A673 (cell line): ENCODE measurements at regions of chr12 and their contacts with region 1.

Region 1: DNA sequence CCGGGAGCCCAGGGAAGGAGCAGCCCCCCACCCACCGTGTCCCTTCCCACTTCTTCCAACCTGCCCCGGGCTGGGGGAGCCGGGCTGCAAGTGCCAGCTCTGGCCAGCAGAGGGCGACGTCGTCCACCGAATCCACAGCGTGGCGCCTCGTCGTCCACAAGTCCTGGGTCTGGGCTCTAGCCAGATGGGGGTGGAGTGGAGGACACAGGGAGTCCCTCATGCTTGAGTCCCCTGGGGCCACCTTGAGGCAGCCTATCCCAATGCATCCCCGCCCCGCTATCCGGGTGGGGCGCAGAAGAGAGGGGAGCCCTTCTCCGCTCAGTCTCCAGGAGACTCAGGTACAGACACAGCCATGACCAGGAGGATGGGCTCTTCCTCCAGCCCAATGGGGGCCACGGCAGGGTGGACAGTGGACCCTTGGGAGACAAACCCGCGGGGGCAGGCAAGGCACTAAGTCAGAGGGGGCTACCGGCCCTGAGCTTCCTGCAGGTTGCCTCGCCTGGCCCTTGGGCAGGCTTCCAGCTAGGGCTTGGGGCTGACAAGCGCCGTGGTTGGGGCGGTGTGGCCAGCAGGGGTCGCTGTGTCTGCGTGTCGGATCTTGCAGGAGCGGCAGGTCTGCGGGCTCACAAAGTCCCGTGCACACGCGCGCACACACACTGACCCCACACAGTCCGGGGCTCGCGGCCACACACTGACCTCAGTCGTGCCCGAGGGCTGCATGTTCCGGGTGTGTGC is 5.5 kb downstream of the AQP5 start:
- DNase-seq: peak; percentile 94
- H3K4me3 ChIP-seq: peak overlapping the region; percentile 47
- H3K27ac ChIP-seq: no peak overlapping the region
- H3K4me1 ChIP-seq: no peaks in the 10 kb centered on the region
- H3K27me3 ChIP-seq: peaks cover under 1% of the 10 kb centered on the region
- CTCF ChIP-seq: peak; percentile 80

Region 2: DNA sequence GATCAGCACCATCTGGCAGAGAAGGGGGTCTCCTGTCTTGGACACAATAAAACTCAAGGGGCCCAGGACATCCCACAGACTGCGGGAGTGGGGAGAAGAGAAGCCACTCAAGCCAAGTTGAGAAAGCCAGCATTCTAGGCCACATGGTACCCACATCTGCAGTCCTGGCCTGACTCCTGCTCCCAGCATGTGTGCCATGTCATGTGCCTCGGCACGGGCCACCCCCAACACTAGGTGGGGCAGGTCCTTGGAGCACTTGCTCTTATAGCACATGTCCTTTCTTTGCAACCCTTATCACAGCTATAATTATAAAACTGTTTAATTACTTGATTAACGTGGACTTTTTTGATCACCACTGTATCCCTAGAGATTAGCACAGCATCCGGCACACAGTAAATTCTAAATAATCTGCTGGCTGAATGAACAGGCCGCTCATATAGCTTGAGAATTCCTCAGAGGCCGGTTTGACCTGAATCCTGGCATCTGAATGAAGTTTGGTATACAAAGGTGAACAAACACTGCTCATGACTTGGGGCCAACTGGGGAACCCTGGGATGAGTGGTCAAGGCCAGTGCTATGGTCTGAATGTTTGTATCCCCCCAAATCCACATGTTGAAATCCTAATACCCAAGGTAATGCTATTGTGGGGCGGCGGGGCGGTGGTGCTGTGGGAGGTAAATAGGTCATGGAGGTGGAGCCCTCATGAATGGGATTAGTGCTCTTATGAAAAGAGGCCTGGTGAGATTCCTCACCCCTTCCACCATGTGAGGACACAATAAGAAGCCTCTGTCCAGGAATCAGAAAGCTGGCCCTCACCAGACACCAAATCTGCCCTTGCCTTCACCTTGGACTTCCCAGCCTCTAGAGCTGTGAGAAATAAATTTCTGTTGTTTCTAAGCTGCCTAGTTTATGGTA is 145.6 kb before region 1 on chr12:
- CTCF ChIA-PET with region 1: no interaction called
- POLR2A ChIA-PET with region 1: no interaction called
- intact Hi-C with region 1: no loop called
- DNase-seq: no peak
- H3K4me3 ChIP-seq: no peak overlapping the region
- H3K27ac ChIP-seq: no peak overlapping the region
- H3K4me1 ChIP-seq: peaks cover 9% of the 10 kb centered on the region
- H3K27me3 ChIP-seq: no peaks in the 10 kb centered on the region
- CTCF ChIP-seq: no peak

Region 3: GRCh38 chr12:49983892-49984291 is 16.7 kb after region 1 on chr12:
- CTCF ChIA-PET with region 1: interaction called, 13 read pairs
- POLR2A ChIA-PET with region 1: no interaction called
- intact Hi-C with region 1: no loop called
- DNase-seq: peak; percentile 92
- H3K4me3 ChIP-seq: no peak overlapping the region
- H3K27ac ChIP-seq: peak overlapping the region; percentile 29
- H3K4me1 ChIP-seq: peaks cover 16% of the 10 kb centered on the region
- H3K27me3 ChIP-seq: no peaks in the 10 kb centered on the region
- CTCF ChIP-seq: 0 out of 2 replicates have a peak, but pooled peaks have one; percentile 17

Region 4: GRCh38 chr12:50043854-50044253 is 76.6 kb after region 1 on chr12:
- CTCF ChIA-PET with region 1: interaction called, 21 read pairs
- POLR2A ChIA-PET with region 1: no interaction called
- intact Hi-C with region 1: no loop called
- DNase-seq: no peak
- H3K4me3 ChIP-seq: no peak overlapping the region
- H3K27ac ChIP-seq: no peak overlapping the region
- H3K4me1 ChIP-seq: no peaks in the 10 kb centered on the region
- H3K27me3 ChIP-seq: no peaks in the 10 kb centered on the region
- CTCF ChIP-seq: no peak

Region 5: GRCh38 chr12:50055831-50056638 is 88.8 kb after region 1 on chr12:
- CTCF ChIA-PET with region 1: interaction called, 31 read pairs
- POLR2A ChIA-PET with region 1: no interaction called
- intact Hi-C with region 1: loop called (anchors 1 kb)
- DNase-seq: peak; percentile 59
- H3K4me3 ChIP-seq: peak overlapping the region; percentile 71
- H3K27ac ChIP-seq: no peak overlapping the region
- H3K4me1 ChIP-seq: peaks cover 21% of the 10 kb centered on the region
- H3K27me3 ChIP-seq: peaks cover 4% of the 10 kb centered on the region
- CTCF ChIP-seq: peak; percentile 98

Region 6: GRCh38 chr12:50786498-50787231 is 819.5 kb after region 1 on chr12:
- CTCF ChIA-PET with region 1: no interaction called
- POLR2A ChIA-PET with region 1: no interaction called
- intact Hi-C with region 1: no loop called
- DNase-seq: no peak
- H3K4me3 ChIP-seq: no peak overlapping the region
- H3K27ac ChIP-seq: no peak overlapping the region
- H3K4me1 ChIP-seq: no peaks in the 10 kb centered on the region
- H3K27me3 ChIP-seq: no peaks in the 10 kb centered on the region
- CTCF ChIP-seq: no peak